ENCODE measurements at regions of chr2 and their contacts with region 1.

Region 1: DNA sequence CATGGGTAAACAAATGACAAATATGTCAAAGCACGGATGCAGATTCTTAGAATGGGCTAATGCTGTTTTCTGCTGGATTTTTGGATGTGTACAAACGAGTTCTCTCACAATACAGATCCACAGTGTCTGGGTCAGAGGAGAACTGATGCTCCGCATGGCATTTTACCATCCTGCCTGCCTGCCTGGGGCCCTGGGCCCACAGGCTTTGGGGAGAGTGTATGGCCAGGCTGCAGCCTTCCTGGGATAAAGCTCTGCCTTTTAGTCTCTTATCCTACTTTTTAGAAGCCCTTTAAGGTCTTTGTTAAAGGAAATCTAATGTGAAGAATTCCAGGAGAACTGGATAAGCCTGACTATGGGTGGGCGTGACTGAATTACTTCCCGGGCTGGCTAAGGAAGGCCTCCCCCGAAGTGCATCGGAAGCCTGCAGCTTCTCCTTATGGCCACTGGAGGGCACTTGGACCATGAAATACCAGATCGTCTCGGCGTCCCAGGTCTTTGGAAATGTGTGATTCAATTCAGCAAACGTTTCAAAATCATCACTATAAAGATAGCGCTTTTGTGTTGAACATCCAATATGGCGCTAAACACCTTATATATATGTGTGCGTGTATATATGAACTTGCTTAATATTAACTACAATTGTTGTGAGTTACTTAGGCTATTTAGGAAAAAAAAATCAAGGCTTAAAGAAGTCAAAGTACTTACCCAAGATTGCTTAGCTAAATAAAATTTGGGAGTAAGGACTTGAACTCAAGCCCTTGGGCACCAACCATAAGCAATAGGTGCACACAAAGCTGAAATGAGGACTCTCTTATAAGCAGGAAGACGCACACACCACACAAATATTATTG is 15.2 kb upstream of the DNPEP start:
- DNase-seq: peak; percentile 82

Region 2: GRCh38 chr2:219344751-219345430 is 58.0 kb before region 1 on chr2:
- CTCF ChIA-PET with region 1: no interaction called
- POLR2A ChIA-PET with region 1: no interaction called
- DNase-seq: no peak

Region 3: GRCh38 chr2:219418155-219418569 is 15.3 kb after region 1 on chr2 and contains the start of gene DES:
- CTCF ChIA-PET with region 1: interaction called, 13 read pairs
- POLR2A ChIA-PET with region 1: no interaction called
- DNase-seq: no peak

Region 4: GRCh38 chr2:219430633-219431615 is 28.0 kb after region 1 on chr2:
- CTCF ChIA-PET with region 1: interaction called, 10 read pairs
- POLR2A ChIA-PET with region 1: interaction called, 3 read pairs
- DNase-seq: no peak

Region 5: DNA sequence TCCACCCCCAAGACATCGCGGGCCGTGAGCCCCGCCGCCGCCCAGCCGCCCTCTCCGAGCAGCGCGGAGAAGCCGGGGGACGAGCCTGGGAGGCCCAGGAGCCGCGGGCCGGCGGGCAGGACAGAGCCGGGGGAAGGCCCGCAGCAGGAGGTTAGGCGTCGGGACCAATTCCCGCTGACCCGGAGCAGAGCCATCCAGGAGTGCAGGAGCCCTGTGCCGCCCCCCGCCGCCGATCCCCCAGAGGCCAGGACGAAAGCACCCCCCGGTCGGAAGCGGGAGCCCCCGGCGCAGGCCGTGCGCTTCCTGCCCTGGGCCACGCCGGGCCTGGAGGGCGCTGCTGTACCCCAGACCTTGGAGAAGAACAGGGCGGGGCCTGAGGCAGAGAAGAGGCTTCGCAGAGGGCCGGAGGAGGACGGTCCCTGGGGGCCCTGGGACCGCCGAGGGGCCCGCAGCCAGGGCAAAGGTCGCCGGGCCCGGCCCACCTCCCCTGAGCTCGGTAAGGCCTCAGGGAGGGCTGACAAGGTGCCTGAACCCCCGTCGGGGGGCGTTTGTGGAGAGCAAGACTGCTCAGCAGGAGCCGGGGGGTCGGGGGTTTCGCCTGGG is 46.0 kb after region 1 on chr2:
- CTCF ChIA-PET with region 1: no interaction called
- POLR2A ChIA-PET with region 1: no interaction called
- DNase-seq: no peak

Region 6: DNA sequence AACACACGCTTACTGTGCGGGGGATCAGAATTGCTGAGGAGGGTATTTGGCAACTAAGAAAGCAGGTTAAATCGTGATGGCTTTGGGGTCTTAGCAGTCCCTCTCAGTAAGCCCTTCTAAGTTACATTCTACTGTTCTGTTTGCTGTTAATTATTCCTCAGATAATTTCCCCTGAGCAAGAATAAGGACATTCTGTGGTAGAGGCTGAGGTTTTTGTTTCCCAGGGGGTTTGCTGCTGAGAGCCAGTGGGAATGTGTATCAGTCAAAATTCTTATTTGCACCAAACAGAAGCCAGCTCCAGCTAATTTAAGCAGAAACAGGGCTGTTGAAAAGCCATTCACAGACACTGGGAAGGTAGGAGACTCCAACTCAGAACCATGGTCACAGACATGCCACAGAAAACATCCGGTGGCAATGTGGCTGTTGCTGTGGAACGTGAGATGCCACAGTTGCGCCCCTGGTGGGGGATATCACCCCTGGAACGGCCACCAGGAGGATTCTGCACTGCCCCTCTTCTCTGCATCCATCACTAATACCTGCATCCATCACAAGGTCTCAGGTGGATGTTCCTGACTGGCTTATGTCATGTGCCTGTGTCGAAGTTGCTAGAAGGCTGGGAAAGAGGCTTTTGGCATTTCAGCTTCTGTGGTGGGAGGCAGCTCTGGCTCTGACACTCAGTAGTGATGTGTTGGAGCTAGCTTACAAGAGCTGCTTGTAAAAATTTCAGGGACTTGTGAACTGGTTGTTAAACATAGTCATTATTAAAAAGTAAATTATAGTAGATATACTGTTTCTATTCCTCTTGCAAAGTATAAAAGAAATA is 247.7 kb after region 1 on chr2:
- CTCF ChIA-PET with region 1: no interaction called
- POLR2A ChIA-PET with region 1: no interaction called
- DNase-seq: no peak

Measured in HEK293T (cell line).